Naive thymus-derived CD4-positive, alpha-beta T cell (primary cell): ENCODE measurements at regions of chr1 and their contacts with region 1.

Region 1: DNA sequence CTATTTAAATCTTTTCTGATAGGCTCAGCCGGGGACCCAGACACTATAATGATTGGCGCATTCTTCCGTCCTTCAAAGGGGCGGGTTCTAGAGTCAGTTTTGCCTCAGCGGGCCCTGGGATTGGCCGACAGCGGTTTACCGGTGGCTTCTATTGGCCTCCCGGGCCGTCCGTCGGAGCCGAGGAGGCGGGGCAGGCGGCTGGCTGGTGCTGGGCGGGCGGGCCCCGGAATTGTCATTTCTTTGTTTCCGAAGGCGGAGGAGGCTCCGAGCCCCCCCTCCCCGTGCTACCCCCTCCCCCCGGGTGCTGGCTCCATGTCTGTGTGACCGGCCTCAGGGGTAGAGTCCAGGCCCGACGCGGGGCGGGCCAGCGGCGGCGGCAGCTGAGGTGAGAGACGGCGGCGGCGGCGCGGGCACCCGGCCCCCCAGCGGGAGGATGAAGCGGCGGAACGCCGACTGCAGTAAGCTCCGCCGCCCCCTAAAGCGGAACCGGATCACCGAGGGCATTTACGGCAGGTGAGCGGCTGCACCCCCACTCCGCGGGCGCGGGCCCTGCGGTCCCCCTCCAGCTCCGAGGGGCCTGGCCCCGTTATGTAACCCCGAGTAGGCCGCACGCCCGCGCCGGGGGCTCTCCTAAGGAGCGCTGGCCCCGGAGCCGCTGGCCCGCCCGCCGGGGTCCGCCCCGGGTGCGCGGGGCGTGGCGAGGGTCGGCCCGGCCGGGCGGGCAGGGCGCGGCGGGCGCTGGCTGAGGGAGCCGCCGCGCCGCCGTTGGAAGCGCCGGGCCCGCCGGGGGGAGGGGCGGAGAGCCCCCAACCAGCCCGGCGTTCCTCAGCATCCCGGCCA is at the start of gene MACO1:
- DNase-seq: peak; percentile 93 to 99 (median 98)
- ATAC-seq: peak; percentile 91
- H3K4me3 ChIP-seq: peak within 1 kb of the TSS; percentile 100
- H3K4me3 Mint-ChIP-seq: peak within 1 kb of the TSS; percentile 93 to 99 (median 98)
- H3K27ac ChIP-seq: peak within 1 kb of the TSS; percentile 96
- H3K27ac Mint-ChIP-seq: peak within 1 kb of the TSS; percentile 96 to 100 (median 100)
- H3K4me1 ChIP-seq: peaks cover 30 to 33% of the 10 kb centered on the region in 2 donors
- H3K4me1 Mint-ChIP-seq: peaks cover 32 to 55% (median 48%) of the 10 kb centered on the region in 7 donors
- H3K27me3 ChIP-seq: no peaks in the 10 kb centered on the region
- H3K27me3 Mint-ChIP-seq: peaks cover 0 to 3% (median 0%) of the 10 kb centered on the region in 5 donors
- total RNA-seq, gene MACO1: 16.7 to 25.9 (median 22.0) TPM

Region 2: GRCh38 chr1:25232027-25232865 is 198.6 kb before region 1 on chr1 and contains the start of gene SYF2:
- CTCF ChIA-PET with region 1: no interaction called
- POLR2A ChIA-PET with region 1: interaction called, 16 read pairs
- intact Hi-C with region 1: loop called in 1 of 2 experiments (anchors 2 kb)
- DNase-seq: peak; percentile 71 to 93 (median 90)
- ATAC-seq: peak; percentile 94
- H3K4me3 ChIP-seq: peak within 1 kb of the TSS; percentile 92
- H3K4me3 Mint-ChIP-seq: no peak within 1 kb of the TSS
- H3K27ac ChIP-seq: peak within 1 kb of the TSS; percentile 91
- H3K27ac Mint-ChIP-seq: no peak within 1 kb of the TSS
- H3K4me1 ChIP-seq: peaks cover 14 to 15% of the 10 kb centered on the region in 2 donors
- H3K4me1 Mint-ChIP-seq: peaks cover 18 to 33% (median 30%) of the 10 kb centered on the region in 7 donors
- H3K27me3 ChIP-seq: no peaks in the 10 kb centered on the region
- H3K27me3 Mint-ChIP-seq: no peaks in the 10 kb centered on the region
- total RNA-seq, gene SYF2: 44.4 to 83.3 (median 59.4) TPM

Region 3: DNA sequence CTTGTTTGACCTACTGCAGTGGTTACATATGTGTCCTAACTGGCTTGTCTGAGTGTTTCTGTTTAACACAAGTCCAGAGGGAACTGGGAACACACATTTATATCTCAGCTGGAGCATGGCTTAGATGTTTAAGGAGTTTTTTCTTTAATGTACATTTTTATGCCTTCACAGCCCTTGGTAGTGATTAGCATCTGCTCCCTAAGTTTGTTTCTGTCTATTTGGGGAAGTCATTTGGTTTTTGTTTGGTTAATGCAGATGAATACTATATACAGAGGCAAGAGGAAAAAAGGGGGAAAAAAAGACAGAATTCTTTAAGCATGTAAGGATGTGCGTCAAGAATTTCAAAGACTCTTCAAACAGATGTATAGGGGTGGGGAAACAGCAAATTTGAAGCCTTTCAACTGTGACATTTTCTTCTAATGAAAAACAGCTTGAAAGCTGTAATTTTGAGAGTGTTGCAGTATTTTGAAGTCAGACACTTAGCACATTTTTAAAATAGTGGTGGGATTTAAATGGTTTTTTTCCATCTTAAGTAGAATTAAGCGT is 15.2 kb after region 1 on chr1:
- CTCF ChIA-PET with region 1: interaction called, 4 read pairs
- POLR2A ChIA-PET with region 1: interaction called, 3 read pairs
- intact Hi-C with region 1: loop called (anchors 1 to 2 kb)
- DNase-seq: no peak
- ATAC-seq: no peak
- H3K4me3 ChIP-seq: no peak overlapping the region
- H3K4me3 Mint-ChIP-seq: peak overlapping the region in 1 of 10 donors; percentile 41
- H3K27ac ChIP-seq: no peak overlapping the region
- H3K27ac Mint-ChIP-seq: peak overlapping the region in 6 of 9 donors; percentile 17 to 76 (median 47)
- H3K4me1 ChIP-seq: peaks cover 0 to 4% of the 10 kb centered on the region in 2 donors
- H3K4me1 Mint-ChIP-seq: peaks cover 33 to 62% (median 45%) of the 10 kb centered on the region in 7 donors
- H3K27me3 ChIP-seq: no peaks in the 10 kb centered on the region
- H3K27me3 Mint-ChIP-seq: no peaks in the 10 kb centered on the region

Region 4: DNA sequence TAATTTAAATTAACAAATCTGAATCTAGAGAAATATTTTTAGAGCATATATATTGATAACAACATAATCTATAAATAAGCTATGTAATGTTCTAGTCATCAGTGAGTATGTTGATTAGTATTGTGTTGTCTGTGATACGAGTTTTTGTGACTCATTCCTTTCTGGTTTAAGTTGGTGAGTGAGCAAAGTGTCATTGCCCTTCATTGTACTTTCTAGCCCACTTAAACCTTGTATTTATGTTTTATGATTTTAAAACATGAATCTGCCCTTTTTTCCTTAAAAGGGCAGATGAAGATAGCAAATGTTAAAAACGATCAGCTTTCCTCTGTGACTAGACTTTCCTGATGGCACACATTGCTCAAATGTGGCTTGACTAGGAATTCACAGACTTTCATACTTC is 38.3 kb after region 1 on chr1:
- CTCF ChIA-PET with region 1: interaction called, 5 read pairs
- POLR2A ChIA-PET with region 1: interaction called, 24 read pairs
- intact Hi-C with region 1: loop called (anchors 1 to 5 kb)
- DNase-seq: no peak
- ATAC-seq: no peak
- H3K4me3 ChIP-seq: no peak overlapping the region
- H3K4me3 Mint-ChIP-seq: no peak overlapping the region
- H3K27ac ChIP-seq: no peak overlapping the region
- H3K27ac Mint-ChIP-seq: peak overlapping the region in 1 of 9 donors; percentile 50
- H3K4me1 ChIP-seq: peaks cover 9 to 43% of the 10 kb centered on the region in 2 donors
- H3K4me1 Mint-ChIP-seq: peaks cover 28 to 78% (median 70%) of the 10 kb centered on the region in 7 donors
- H3K27me3 ChIP-seq: no peaks in the 10 kb centered on the region
- H3K27me3 Mint-ChIP-seq: no peaks in the 10 kb centered on the region

Region 5: GRCh38 chr1:25487628-25488027 is 56.7 kb after region 1 on chr1:
- CTCF ChIA-PET with region 1: interaction called, 5 read pairs
- POLR2A ChIA-PET with region 1: interaction called, 3 read pairs
- intact Hi-C with region 1: loop called in 1 of 2 experiments (anchors 5 kb)
- DNase-seq: peak in 6 of 9 donors; percentile 30 to 48 (median 38)
- ATAC-seq: no peak
- H3K4me3 ChIP-seq: no peak overlapping the region
- H3K4me3 Mint-ChIP-seq: no peak overlapping the region
- H3K27ac ChIP-seq: no peak overlapping the region
- H3K27ac Mint-ChIP-seq: peak overlapping the region in 2 of 9 donors; percentile 7 to 65
- H3K4me1 ChIP-seq: no peaks in the 10 kb centered on the region
- H3K4me1 Mint-ChIP-seq: peaks cover 0 to 26% (median 17%) of the 10 kb centered on the region in 7 donors
- H3K27me3 ChIP-seq: no peaks in the 10 kb centered on the region
- H3K27me3 Mint-ChIP-seq: no peaks in the 10 kb centered on the region

Region 6: DNA sequence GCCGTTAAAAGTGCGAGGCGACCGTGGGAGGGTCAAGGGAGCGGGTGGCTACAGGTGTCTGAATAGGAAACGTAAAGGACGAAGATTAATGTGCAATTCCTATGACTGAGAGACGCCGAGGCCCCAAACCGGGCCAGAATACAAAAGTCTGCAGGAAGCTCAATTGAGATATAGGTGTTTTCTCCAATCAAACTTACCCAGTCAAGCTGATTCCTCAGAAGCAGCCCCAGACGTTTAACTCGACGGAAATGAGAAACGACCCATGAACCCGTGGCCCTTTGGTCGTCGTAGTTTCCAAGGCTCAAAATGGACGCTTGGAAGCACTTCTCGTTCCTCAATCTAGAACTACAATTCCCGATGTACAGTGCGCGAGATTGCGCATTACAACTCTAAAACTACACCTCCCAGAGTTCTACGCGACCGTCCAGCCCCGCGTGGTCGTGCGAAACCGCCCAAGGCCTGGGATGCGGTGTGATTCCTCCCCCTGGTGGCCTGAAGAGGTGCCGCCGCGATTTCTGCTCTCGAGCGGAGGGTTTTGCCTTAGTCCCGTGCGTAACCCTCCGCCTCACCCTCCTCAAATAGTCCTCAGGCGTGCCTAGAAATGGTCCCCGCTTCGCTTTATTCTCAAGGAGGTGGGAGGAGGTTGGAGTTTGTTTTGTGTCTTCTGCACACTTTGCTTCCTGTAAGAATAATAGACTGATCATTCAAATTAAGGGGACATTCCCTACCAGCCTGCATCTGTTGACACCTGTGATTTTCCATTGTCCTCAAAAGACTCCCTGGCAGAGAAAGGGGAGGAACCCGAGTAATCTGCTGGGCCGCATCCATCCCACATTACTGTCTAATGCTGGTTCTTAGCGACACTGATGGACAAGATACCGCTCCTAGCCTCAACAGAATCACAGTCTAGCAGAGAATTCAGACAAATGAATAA is 567.2 kb after region 1 on chr1 and contains the start of gene PAFAH2:
- CTCF ChIA-PET with region 1: no interaction called
- POLR2A ChIA-PET with region 1: no interaction called
- intact Hi-C with region 1: loop called (anchors 1 to 10 kb)
- DNase-seq: peak; percentile 83 to 99 (median 98)
- ATAC-seq: peak; percentile 98
- H3K4me3 ChIP-seq: peak within 1 kb of the TSS; percentile 76
- H3K4me3 Mint-ChIP-seq: peak within 1 kb of the TSS; percentile 91 to 99 (median 96)
- H3K27ac ChIP-seq: peak within 1 kb of the TSS; percentile 89
- H3K27ac Mint-ChIP-seq: peak within 1 kb of the TSS; percentile 96 to 99 (median 99)
- H3K4me1 ChIP-seq: peaks cover 8 to 18% of the 10 kb centered on the region in 2 donors
- H3K4me1 Mint-ChIP-seq: peaks cover 19 to 50% (median 40%) of the 10 kb centered on the region in 7 donors
- H3K27me3 ChIP-seq: no peaks in the 10 kb centered on the region
- H3K27me3 Mint-ChIP-seq: no peaks in the 10 kb centered on the region
- total RNA-seq, gene PAFAH2: 11.4 to 36.0 (median 12.7) TPM